H1 (cell line): ENCODE measurements at regions of chr20 and their contacts with region 1.

Region 1: GRCh38 chr20:5996765-5997164 is 46.3 kb downstream of the MCM8 start:
- DNase-seq: no peak
- H3K4me3 ChIP-seq: no peak overlapping the region
- H3K27ac ChIP-seq: no peak overlapping the region
- H3K4me1 ChIP-seq: no peaks in the 10 kb centered on the region
- H3K27me3 ChIP-seq: no peaks in the 10 kb centered on the region
- CTCF ChIP-seq: no peak
- EP300 ChIP-seq: no peak
- POLR2A ChIP-seq: no peak
- RAD21 ChIP-seq: no peak

Region 2: DNA sequence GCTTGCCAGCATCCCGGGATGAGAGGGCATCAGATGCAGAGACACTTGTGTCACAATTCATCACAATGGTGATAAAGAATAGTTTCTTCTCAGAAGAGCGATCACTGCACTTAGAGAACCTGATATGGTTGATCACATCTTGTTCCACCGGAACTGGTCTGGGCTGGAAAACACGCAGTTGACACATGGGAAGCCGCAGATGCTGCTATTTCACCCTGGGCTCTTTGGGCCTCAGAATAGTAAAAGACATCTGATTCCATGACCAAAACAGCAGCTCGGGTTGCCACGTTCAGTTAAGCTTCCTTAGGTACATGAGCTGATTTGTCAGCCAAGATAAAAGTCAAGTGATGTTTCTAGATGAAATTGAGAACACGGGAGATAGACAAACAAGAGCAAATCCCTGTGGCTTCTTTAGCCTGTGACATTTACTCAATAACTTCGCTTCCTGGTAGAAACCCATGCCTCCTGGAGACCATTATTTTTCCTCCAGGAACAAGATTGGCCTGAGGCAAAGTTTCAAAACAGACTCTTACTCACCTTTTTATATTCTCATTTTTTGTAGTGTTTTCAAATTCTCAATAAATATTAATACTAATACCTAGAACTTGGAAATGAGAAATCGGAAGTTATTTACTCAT is 105.9 kb before region 1 on chr20:
- CTCF ChIA-PET with region 1: no interaction called
- POLR2A ChIA-PET with region 1: no interaction called
- DNase-seq: no peak
- H3K4me3 ChIP-seq: no peak overlapping the region
- H3K27ac ChIP-seq: no peak overlapping the region
- H3K4me1 ChIP-seq: no peaks in the 10 kb centered on the region
- H3K27me3 ChIP-seq: no peaks in the 10 kb centered on the region; a peak in 1 of 7 replicates
- CTCF ChIP-seq: no peak
- EP300 ChIP-seq: no peak
- POLR2A ChIP-seq: no peak
- RAD21 ChIP-seq: no peak

Region 3: DNA sequence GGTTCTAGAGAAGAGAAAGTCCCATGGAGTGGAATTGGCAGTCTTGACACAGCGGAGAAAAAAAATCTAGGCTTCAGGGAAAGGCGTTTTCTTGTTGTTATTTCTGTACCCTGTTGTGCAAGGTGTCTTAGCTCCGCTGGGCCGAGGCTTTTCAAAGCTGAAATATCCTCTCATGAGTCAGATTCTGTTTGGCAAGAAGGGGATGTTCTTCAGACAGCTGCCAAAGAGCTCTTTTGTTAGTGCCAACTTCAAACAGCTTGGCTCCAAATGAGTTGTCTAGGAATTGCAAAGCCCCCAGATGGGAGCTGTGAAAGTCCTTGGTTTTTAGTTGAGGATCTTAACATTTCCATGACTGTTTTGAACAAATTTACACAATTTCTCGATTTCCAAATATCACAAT is 11.5 kb after region 1 on chr20:
- CTCF ChIA-PET with region 1: interaction called, 3 read pairs
- POLR2A ChIA-PET with region 1: interaction called, 10 read pairs
- DNase-seq: no peak
- H3K4me3 ChIP-seq: no peak overlapping the region
- H3K27ac ChIP-seq: no peak overlapping the region
- H3K4me1 ChIP-seq: peaks cover 0 to 6% (median 3%) of the 10 kb centered on the region in 4 experiments; a peak in 5 of 7 replicates
- H3K27me3 ChIP-seq: no peaks in the 10 kb centered on the region
- CTCF ChIP-seq: no peak
- EP300 ChIP-seq: no peak
- POLR2A ChIP-seq: no peak
- RAD21 ChIP-seq: no peak